ENCODE measurements at regions of chr3 and their contacts with region 1.

Region 1: DNA sequence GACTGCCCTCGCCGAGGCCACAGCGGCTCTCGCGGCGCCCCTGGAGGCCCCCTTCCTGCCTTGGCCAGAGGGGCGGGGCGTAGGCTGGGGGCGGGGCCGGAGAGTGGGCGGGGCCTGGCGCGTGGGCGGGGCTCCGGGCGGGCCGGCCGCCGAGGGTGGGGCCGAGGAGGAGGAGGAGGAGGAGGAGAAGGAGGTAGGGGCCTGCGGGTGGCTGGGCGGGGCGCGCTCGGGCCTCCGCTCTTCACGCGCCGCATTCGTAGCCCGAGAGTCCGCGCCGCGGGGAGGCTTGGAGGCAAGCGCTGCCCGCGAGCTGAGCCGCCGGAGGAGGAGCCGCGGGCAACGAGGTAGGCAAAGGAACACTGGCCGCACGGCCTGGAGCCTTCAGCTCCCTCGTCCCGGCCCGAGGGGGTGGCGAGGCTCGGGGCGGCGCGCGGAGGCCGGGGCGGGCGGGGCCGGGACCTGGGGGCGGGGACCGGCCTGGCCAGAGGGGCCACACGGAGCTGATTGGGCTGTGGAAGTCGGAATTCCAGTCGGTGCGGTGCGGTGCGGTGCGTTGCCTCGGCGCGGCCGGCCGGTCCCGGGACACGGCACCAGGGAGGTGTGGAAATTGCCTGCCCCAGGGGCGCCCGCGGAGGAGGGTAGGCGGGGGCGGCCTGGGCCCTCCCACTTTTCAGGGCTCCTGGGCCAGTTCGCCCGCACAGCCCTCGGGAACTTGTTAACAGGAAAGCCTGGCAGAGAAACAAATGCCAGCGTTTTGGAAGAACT is at the start of gene PPP2R3A:
- DNase-seq: peak; percentile 89
- ATAC-seq: peak; percentile 97
- total RNA-seq, gene PPP2R3A: 107 TPM

Region 2: DNA sequence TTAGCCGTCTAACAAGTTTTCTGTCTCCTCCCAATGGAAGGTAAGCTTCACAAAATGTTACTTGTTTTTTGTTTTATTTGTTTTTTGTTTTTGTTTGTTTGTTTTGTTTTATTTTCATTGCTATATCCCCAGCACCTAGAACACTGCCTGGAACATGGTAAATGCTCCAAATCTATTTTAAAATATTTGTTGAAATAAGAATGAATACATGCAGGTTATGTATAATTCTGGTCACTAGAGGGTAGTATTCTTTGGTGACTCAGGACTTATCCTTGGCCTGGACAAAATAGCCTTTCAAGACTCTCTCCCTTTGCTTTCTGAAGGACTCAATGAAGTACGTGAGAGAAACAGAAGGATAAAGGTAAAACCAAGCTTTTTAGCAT is 47.1 kb before region 1 on chr3:
- intact Hi-C with region 1: loop called (anchors 5 kb)
- DNase-seq: no peak
- ATAC-seq: peak; percentile 62

Region 3: GRCh38 chr3:136249593-136250225 is 284.0 kb after region 1 on chr3:
- intact Hi-C with region 1: no loop called
- DNase-seq: no peak
- ATAC-seq: no peak